Activated T-helper 2 cell treated with anti-CD3 and anti-CD28 coated beads, Interferon-gamma antibody, Interleukin-2, Interleukin-4, amounts not matched to agents 10 μg/mL and 5 μg/mL and 100 μg/mL, durations not matched to agents 14 hours and 24 hours and 36 hours (primary cell): ENCODE measurements at regions of chr12 and their contacts with region 1.

Region 1: GRCh38 chr12:121443193-121443870 is 43.4 kb downstream of the RNF34 start:
- DNase-seq: peak; percentile 48
- H3K4me3 Mint-ChIP-seq: no peak overlapping the region
- H3K27ac Mint-ChIP-seq: peak overlapping the region; percentile 63
- H3K4me1 Mint-ChIP-seq: peaks cover 6% of the 10 kb centered on the region
- H3K27me3 Mint-ChIP-seq: no peaks in the 10 kb centered on the region

Region 2: DNA sequence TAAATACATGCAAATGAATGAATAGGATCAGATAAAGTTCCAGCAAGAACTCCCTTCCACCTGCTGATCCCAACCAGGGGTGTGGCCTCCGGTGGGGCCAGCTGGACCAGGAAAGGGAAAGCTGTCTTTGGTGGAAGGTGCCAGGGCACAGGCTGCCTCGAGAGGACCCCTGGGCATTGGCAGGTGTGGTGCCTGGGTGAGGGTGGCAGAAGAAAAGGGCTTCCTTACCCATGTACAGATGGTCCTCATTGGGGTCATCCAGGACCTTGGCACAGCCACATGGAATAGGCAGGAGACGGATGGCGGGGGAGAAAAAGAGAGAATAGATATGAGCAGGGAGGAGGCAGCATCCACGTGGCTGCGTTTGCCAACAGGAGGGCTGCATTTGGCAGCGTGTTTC is 183.2 kb before region 1 on chr12:
- intact Hi-C with region 1: no loop called
- DNase-seq: no peak
- H3K4me3 Mint-ChIP-seq: no peak overlapping the region
- H3K27ac Mint-ChIP-seq: no peak overlapping the region
- H3K4me1 Mint-ChIP-seq: no peaks in the 10 kb centered on the region
- H3K27me3 Mint-ChIP-seq: no peaks in the 10 kb centered on the region

Region 3: GRCh38 chr12:121334513-121335343 is 108.6 kb before region 1 on chr12:
- intact Hi-C with region 1: loop called (anchors 1 kb)
- DNase-seq: no peak
- H3K4me3 Mint-ChIP-seq: no peak overlapping the region
- H3K27ac Mint-ChIP-seq: no peak overlapping the region
- H3K4me1 Mint-ChIP-seq: no peaks in the 10 kb centered on the region
- H3K27me3 Mint-ChIP-seq: no peaks in the 10 kb centered on the region